ENCODE measurements at regions of chr2 and their contacts with region 1.

Region 1: GRCh38 chr2:177332041-177332991 is 60.3 kb upstream of the AGPS start:
- DNase-seq: peak; percentile 39
- ATAC-seq: peak; percentile 78
- H3K4me3 ChIP-seq: no peak overlapping the region
- H3K27ac ChIP-seq: no peak overlapping the region
- H3K4me1 ChIP-seq: peaks cover 8 to 21% of the 10 kb centered on the region in 2 experiments
- H3K27me3 ChIP-seq: no peaks in the 10 kb centered on the region
- CTCF ChIP-seq: peak; percentile 57 to 82 (median 64); a peak in 5 of 6 replicates
- POLR2A ChIP-seq: no peak
- RAD21 ChIP-seq: peak; percentile 89

Region 2: DNA sequence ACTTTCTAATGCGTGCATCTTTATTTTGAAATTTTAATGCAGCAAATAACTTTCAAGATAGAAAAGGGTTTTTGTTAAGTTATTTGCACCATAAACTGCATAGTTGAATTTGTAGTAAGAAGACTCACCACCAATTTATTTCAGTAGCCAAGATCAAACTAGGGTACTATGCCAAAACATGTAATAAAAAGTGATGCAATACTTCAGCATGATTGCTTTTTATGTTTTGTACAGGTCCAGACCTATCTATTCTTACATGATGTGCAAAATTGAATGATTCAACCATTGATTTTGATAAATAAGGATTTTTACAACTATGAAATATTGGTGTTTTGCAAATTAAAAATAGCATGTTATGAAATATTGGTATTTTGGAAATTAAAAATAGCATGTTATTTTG is 87.0 kb after region 1 on chr2:
- CTCF ChIA-PET with region 1: interaction called, 27 read pairs
- POLR2A ChIA-PET with region 1: no interaction called
- RAD21 ChIA-PET with region 1: interaction called in 1 of 2 experiments, 4 read pairs
- intact Hi-C with region 1: loop called (anchors 1 kb)
- DNase-seq: no peak
- ATAC-seq: no peak
- H3K4me3 ChIP-seq: no peak overlapping the region
- H3K27ac ChIP-seq: no peak overlapping the region
- H3K4me1 ChIP-seq: peaks cover 0 to 9% of the 10 kb centered on the region in 2 experiments; a peak in 2 of 4 replicates
- H3K27me3 ChIP-seq: no peaks in the 10 kb centered on the region
- CTCF ChIP-seq: no peak
- POLR2A ChIP-seq: no peak
- RAD21 ChIP-seq: no peak

Region 3: DNA sequence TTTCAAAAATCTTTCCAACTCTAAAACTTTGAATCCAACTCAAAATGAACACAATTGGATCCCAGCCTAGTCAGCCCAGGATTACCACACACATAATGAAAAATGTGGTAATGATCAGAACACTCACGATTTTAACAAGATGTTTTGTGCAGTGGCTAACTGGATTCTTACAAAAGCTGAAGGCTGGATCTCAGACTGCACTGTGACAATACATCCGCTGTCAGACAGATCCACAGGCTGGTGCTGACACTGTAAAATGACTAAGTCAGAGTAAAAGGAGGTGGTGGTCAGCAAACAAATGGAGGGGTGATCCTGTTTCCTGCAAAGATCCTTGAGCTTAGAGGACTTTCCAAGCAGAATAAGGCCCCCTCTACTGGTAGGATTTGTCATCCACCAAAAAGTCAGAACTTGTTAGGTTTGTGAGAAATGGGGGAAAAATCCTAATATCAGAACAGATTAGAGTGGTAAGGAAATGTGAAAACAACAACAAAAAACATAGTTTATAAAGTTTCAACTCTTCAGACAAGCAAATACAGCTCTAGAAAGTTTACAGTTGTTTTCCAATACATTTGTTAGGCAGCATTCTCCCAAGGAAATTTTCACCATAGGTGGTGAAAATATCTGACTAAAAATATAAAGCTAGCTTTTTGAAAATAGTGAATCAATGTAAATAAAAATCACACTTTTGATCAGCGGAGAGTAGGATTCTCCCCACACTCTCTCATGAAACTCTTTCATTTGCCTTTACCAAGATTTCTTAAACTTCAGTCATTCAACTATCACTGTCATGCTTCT is 272.2 kb after region 1 on chr2:
- CTCF ChIA-PET with region 1: interaction called, 21 read pairs
- POLR2A ChIA-PET with region 1: no interaction called
- RAD21 ChIA-PET with region 1: no interaction called
- intact Hi-C with region 1: loop called (anchors 1 kb)
- DNase-seq: peak; percentile 53
- ATAC-seq: peak; percentile 82
- H3K4me3 ChIP-seq: no peak overlapping the region
- H3K27ac ChIP-seq: no peak overlapping the region
- H3K4me1 ChIP-seq: no peaks in the 10 kb centered on the region
- H3K27me3 ChIP-seq: no peaks in the 10 kb centered on the region
- CTCF ChIP-seq: peak; percentile 70 to 85 (median 77); a peak in 5 of 6 replicates
- POLR2A ChIP-seq: no peak
- RAD21 ChIP-seq: peak; percentile 64

Region 4: DNA sequence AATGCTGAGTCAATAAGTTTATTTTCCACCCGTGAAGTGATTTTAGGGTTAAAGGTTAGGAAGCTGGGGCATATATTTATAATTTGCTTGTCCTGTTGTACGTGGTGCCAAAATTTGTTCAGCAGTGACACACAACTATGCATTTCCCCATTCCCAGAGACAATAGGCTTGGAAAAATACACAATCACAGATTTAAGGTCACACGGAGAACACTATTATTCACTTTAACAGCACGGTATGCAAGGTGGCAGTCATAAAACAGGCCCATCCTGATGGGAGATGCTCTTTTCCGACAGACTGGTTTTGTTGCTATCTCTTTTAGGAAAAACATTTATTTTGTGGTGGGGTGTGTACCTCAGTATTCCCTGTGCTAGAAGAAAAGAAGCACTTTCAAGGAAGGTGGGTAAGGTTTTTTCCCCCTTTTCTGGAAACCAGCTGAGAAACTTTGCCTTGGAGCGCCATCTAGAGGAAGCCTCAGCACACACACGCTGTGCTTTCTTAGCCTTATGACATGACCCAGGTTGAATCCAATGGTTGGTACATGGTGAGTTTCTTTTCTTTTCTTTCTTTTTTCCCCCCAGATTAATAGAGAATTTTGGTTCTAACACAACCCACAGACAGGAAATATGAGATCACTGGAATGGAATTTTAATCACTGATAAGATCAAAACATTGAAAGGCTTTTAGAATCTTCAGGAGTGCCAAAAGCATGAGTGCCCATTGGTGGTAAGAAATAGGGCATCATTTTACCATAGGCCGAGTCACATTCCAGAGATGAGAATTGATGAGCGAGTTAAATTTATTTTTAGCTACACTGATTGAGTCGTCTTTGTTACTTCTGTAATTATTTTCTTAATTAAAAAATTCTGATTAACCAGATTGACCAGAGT is 392.3 kb after region 1 on chr2:
- CTCF ChIA-PET with region 1: interaction called, 13 read pairs
- POLR2A ChIA-PET with region 1: no interaction called
- RAD21 ChIA-PET with region 1: no interaction called
- intact Hi-C with region 1: loop called (anchors 1 kb)
- DNase-seq: peak; percentile 27
- ATAC-seq: peak; percentile 95
- H3K4me3 ChIP-seq: no peak overlapping the region
- H3K27ac ChIP-seq: no peak overlapping the region
- H3K4me1 ChIP-seq: no peaks in the 10 kb centered on the region
- H3K27me3 ChIP-seq: no peaks in the 10 kb centered on the region
- CTCF ChIP-seq: peak; percentile 79 to 97 (median 93); a peak in 5 of 6 replicates
- POLR2A ChIP-seq: no peak
- RAD21 ChIP-seq: peak; percentile 86

Region 5: DNA sequence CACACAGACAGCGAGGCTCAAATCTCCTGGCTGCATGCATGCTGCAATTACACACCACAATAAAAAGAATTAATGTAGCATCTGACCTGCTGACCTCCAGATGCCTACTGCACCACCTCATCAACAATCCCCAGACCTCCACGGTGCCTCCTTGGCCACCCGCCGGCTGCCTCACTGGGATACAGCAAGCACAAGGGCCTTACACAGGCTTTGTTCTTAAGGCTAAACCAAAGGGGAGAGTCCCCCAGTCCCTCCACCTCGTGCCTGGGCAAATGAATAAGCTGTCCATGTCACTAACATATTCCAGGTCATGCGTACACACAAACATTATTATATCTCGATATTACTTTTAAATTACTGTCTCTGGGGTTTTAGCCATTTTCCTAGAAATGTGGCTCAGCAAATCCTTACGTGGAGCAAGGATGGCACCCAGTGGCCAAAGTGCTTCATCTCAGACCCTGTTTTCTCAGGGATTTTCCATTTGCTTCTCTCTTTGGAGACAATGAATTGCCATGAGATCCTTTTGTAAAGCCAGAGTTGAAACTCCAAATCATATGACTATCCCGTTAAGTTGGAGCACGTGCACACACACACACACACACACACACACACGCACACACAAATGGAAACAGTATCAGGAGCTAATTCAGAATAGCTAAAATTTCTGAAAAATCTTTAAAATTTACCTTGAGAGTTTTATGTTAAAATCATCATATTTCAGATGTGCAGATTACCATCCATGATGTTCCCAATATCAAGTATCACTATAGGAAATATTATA is 426.5 kb after region 1 on chr2:
- CTCF ChIA-PET with region 1: interaction called, 6 read pairs
- POLR2A ChIA-PET with region 1: no interaction called
- RAD21 ChIA-PET with region 1: no interaction called
- intact Hi-C with region 1: loop called (anchors 1 kb)
- DNase-seq: peak; percentile 41
- ATAC-seq: peak; percentile 57
- H3K4me3 ChIP-seq: no peak overlapping the region
- H3K27ac ChIP-seq: no peak overlapping the region
- H3K4me1 ChIP-seq: peaks cover 0 to 9% of the 10 kb centered on the region in 2 experiments; a peak in 2 of 4 replicates
- H3K27me3 ChIP-seq: no peaks in the 10 kb centered on the region
- CTCF ChIP-seq: peak; percentile 37 to 65 (median 60); a peak in 5 of 6 replicates
- POLR2A ChIP-seq: no peak
- RAD21 ChIP-seq: peak; percentile 84